Testis (tissue), 5 donors: ENCODE measurements at regions of chr10 and their contacts with region 1.

Region 1: DNA sequence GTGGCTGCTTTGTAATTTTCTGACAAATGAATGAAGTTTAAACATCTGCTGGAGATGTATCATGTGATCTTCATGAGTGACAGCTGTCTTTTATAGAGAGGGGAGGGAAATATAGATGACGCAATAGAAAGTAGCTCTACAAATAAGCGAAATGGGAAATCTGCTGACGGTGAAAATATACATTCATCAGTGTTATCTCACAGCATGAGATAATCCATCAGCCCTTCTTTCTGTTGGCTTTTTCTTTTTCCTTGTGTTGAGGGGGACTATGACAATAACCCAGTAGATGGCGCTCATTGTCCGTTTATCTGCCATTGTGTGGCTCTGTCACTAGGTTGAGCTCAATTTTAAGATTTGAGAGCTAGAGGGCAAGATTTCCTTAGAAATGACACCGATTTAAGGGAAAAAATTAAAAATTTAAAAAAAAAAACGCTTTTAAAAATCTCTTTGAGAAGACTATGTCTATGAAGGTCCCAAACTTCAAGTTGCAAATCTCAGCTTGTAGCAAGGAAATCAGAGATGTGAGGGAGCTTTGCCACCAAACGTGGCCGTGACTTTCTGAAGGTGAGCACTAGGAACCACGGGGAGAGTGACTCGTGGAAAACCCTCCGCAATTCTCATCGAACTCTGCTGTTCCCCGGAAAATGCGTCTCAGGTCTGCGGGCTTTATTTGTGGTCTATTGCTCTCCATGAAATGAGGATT is 114.6 kb upstream of the SFMBT2 start:
- DNase-seq: peak; percentile 85
- H3K4me3 ChIP-seq: no peak overlapping the region
- H3K27ac ChIP-seq: no peak overlapping the region
- H3K4me1 ChIP-seq: no peaks in the 10 kb centered on the region
- H3K27me3 ChIP-seq: no peaks in the 10 kb centered on the region
- CTCF ChIP-seq: peak; percentile 77 to 91 (median 85)
- POLR2A ChIP-seq: no peak

Region 2: GRCh38 chr10:7687228-7687907 is 161.9 kb after region 1 on chr10:
- intact Hi-C with region 1: loop called (anchors 5 kb)
- DNase-seq: peak; percentile 94
- H3K4me3 ChIP-seq: no peak overlapping the region
- H3K27ac ChIP-seq: no peak overlapping the region
- H3K4me1 ChIP-seq: no peaks in the 10 kb centered on the region
- H3K27me3 ChIP-seq: no peaks in the 10 kb centered on the region
- CTCF ChIP-seq: peak; percentile 91 to 96 (median 92)
- POLR2A ChIP-seq: no peak